Dorsolateral prefrontal cortex (tissue), 120 donors: ENCODE measurements at regions of chr11 and their contacts with region 1.

Region 1: DNA sequence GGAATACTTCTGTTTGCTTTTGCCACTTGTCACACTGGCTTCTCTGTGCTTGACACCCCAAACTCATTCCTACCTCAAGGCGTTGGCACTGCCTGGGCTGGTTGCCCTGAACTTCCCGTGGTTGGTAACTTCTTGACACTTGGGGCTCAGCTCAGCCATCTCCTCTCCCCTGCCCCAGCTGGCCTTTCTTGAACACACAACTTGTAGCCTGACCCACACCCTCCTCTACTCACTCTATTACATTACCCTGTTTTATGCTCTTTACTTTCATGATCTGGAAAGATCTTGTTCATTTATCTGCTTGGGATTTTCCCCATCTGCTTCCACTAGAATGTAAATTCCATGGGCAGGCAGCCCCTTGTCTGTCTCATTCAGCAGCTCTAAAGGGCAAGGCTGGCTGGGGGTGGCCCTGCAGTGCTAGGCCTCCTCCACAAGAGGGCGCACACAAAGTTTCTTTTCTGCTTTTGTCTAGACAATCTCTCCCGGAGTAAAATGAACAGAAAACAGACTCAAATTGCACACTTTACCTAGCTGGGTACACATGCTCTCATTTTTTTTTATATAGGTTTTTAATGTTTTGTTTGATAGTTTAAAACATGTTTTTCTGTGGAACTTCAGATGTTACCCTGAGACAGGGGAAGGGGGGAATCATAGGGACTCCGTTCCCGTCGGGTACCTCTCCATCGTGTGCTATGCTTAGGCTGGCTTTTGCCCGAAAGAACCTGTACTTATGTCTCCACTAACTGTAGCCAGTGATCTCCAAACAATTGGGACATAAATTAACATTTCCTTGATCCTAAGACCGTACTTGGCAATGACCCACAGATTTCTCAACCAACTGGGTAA is 16.4 kb upstream of the MRGPRX2 start:
- DNase-seq: peak in 7 of 10 donors; percentile 22 to 73 (median 59)
- H3K4me3 ChIP-seq: peak overlapping the region in 3 of 59 donors; percentile 7 to 18 (median 11)
- H3K27ac ChIP-seq: no peak overlapping the region
- H3K27me3 ChIP-seq: peaks cover 0 to 10% (median 0%) of the 10 kb centered on the region in 45 donors
- CTCF ChIP-seq: peak; percentile 72 to 98 (median 95)

Region 2: GRCh38 chr11:19110280-19110679 is 33.3 kb after region 1 on chr11:
- intact Hi-C with region 1: loop called in 1 of 2 experiments (anchors 5 kb)
- DNase-seq: peak in 3 of 10 donors; percentile 32 to 56 (median 42)
- H3K4me3 ChIP-seq: no peak overlapping the region
- H3K27ac ChIP-seq: peak overlapping the region in 3 of 59 donors; percentile 6 to 67 (median 44)
- H3K27me3 ChIP-seq: peaks cover 0 to 4% (median 0%) of the 10 kb centered on the region in 45 donors
- CTCF ChIP-seq: no peak